AG04449 (cell line): ENCODE measurements at regions of chr9 and their contacts with region 1.

Region 1: GRCh38 chr9:4243113-4243512 is 56.8 kb downstream of the GLIS3 start:
- DNase-seq: no peak
- H3K4me3 ChIP-seq: no peak overlapping the region
- CTCF ChIP-seq: no peak

Region 2: DNA sequence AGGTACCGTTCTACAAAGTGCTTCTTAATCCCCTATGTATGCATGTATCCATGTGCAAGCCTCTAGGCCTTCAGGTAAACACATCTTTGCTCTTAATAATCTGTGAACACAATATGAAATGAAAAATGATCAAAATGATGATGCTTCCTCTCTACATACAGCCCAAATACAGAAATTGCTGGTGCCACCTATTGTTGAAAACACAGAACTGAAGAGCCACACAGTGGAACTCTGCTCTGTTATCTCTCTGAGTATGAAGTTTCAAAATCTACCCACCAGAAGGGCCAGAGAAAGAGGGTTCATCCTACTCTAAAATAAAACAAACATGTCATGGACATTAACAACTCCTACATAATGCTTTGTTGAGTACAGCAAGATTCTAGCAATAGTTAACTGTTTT is 14.5 kb before region 1 on chr9:
- CTCF ChIA-PET with region 1: interaction called, 22 read pairs
- POLR2A ChIA-PET with region 1: interaction called, 3 read pairs
- DNase-seq: no peak
- H3K4me3 ChIP-seq: no peak overlapping the region
- CTCF ChIP-seq: peak; percentile 46

Region 3: GRCh38 chr9:4262735-4263141 is 19.6 kb after region 1 on chr9:
- CTCF ChIA-PET with region 1: no interaction called
- POLR2A ChIA-PET with region 1: no interaction called
- DNase-seq: peak; percentile 19
- H3K4me3 ChIP-seq: no peak overlapping the region
- CTCF ChIP-seq: no peak

Region 4: DNA sequence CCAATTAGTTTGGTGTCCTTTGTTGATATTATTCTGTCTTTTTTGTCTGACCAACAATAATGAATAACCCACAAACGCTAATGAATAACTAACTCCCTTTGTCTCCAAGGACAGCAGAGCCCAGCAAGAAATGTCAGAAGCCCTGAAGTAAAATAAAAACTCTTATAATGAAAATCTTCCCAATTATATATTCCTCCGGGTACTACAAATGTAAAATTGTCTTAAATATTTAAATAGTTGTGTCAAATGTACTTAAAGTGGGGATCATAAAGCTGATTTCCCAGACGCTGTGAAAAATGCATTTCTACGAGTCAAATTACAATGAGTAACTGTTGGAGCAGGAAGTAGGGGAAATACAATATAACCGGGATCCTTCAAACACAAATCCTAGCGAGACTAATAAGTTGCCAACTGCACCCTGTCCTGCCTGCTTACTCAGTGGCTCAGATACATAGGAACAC is 34.4 kb after region 1 on chr9:
- CTCF ChIA-PET with region 1: no interaction called
- POLR2A ChIA-PET with region 1: no interaction called
- DNase-seq: no peak
- H3K4me3 ChIP-seq: no peak overlapping the region
- CTCF ChIP-seq: no peak